ENCODE measurements at regions of chr4 and their contacts with region 1.

Region 1: DNA sequence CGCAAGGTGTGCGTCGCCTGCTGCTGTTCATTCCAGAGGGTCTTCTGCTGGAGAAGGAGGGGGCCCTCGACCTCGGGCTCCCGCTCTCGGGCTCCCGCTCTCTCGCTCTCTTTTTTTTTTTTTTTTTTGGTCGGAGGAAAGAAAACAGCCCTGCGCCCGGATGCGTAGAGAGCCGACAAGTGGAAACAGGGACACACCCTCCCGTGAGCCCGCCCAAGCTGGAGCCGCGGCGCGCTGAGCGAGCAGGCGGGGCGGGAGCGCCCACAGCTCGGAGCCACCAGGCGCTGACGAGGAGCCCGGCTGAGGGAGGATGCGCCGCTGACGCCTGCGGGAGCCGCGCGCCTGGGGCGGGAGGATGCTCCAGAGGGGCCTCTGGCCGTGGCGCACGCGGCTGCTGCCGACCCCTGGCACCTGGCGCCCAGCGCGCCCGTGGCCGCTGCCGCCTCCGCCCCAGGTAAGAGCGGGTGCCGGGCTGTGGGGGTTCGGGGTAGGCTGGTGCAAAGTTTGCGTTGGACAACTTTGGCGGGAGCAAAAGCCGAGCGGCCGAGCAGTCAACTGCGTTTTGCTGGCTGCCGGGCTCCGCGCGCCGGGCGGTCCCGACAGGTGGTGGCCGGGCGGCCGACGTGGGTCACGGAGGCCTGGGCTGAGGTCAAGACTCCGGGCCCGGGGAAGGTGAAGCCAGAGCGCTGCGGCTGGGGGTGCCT is at the start of gene MCUB:
- DNase-seq: peak; percentile 89
- ATAC-seq: peak; percentile 82
- H3K4me3 ChIP-seq: peak within 1 kb of the TSS; percentile 83 to 93 (median 91)
- H3K4me3 Mint-ChIP-seq: peak within 1 kb of the TSS; percentile 100
- H3K27ac ChIP-seq: peak within 1 kb of the TSS; percentile 77 to 83
- H3K27ac Mint-ChIP-seq: peak within 1 kb of the TSS; percentile 100
- H3K4me1 ChIP-seq: peaks cover 17 to 19% of the 10 kb centered on the region in 2 donors
- H3K4me1 Mint-ChIP-seq: peaks cover 50% of the 10 kb centered on the region
- H3K27me3 ChIP-seq: no peaks in the 10 kb centered on the region
- H3K27me3 Mint-ChIP-seq: no peaks in the 10 kb centered on the region
- CTCF ChIP-seq: no peak
- total RNA-seq, gene MCUB: 52.4 and 59.3 TPM in 2 replicates

Region 2: GRCh38 chr4:109548655-109549054 is 11.5 kb before region 1 on chr4:
- CTCF ChIA-PET with region 1: no interaction called
- POLR2A ChIA-PET with region 1: no interaction called
- intact Hi-C with region 1: no loop called
- DNase-seq: no peak
- ATAC-seq: no peak
- H3K4me3 ChIP-seq: no peak overlapping the region
- H3K4me3 Mint-ChIP-seq: no peak overlapping the region
- H3K27ac ChIP-seq: peak overlapping the region in 1 of 2 donors; percentile 22
- H3K27ac Mint-ChIP-seq: peak overlapping the region; percentile 12
- H3K4me1 ChIP-seq: peaks cover 8% of the 10 kb centered on the region in 2 donors
- H3K4me1 Mint-ChIP-seq: peaks cover 13% of the 10 kb centered on the region
- H3K27me3 ChIP-seq: no peaks in the 10 kb centered on the region
- H3K27me3 Mint-ChIP-seq: no peaks in the 10 kb centered on the region
- CTCF ChIP-seq: no peak

Region 3: GRCh38 chr4:109611045-109611646 is 51.0 kb after region 1 on chr4:
- CTCF ChIA-PET with region 1: no interaction called
- POLR2A ChIA-PET with region 1: no interaction called
- intact Hi-C with region 1: loop called (anchors 10 kb)
- DNase-seq: no peak
- ATAC-seq: no peak
- H3K4me3 ChIP-seq: no peak overlapping the region
- H3K4me3 Mint-ChIP-seq: no peak overlapping the region
- H3K27ac ChIP-seq: no peak overlapping the region
- H3K27ac Mint-ChIP-seq: no peak overlapping the region
- H3K4me1 ChIP-seq: peaks cover 8 to 19% of the 10 kb centered on the region in 2 donors
- H3K4me1 Mint-ChIP-seq: peaks cover 43% of the 10 kb centered on the region
- H3K27me3 ChIP-seq: no peaks in the 10 kb centered on the region
- H3K27me3 Mint-ChIP-seq: no peaks in the 10 kb centered on the region
- CTCF ChIP-seq: no peak

Region 4: GRCh38 chr4:109702950-109703663 is 143.0 kb after region 1 on chr4 and contains the start of gene CASP6:
- CTCF ChIA-PET with region 1: interaction called, 6 read pairs
- POLR2A ChIA-PET with region 1: interaction called, 6 read pairs
- intact Hi-C with region 1: loop called (anchors 2 kb)
- DNase-seq: peak; percentile 78
- ATAC-seq: peak; percentile 80
- H3K4me3 ChIP-seq: peak within 1 kb of the TSS; percentile 69 to 86 (median 78)
- H3K4me3 Mint-ChIP-seq: peak within 1 kb of the TSS; percentile 97
- H3K27ac ChIP-seq: peak within 1 kb of the TSS; percentile 11 to 57
- H3K27ac Mint-ChIP-seq: peak within 1 kb of the TSS; percentile 88
- H3K4me1 ChIP-seq: peaks cover 14 to 18% of the 10 kb centered on the region in 2 donors
- H3K4me1 Mint-ChIP-seq: peaks cover 22% of the 10 kb centered on the region
- H3K27me3 ChIP-seq: no peaks in the 10 kb centered on the region
- H3K27me3 Mint-ChIP-seq: no peaks in the 10 kb centered on the region
- CTCF ChIP-seq: peak; percentile 72
- total RNA-seq, gene CASP6: 7.7 and 8.3 TPM in 2 replicates

Region 5: GRCh38 chr4:109729718-109730618 is 169.8 kb after region 1 on chr4 and contains the start of gene PLA2G12A:
- CTCF ChIA-PET with region 1: no interaction called
- POLR2A ChIA-PET with region 1: interaction called, 4 read pairs
- intact Hi-C with region 1: loop called (anchors 1 kb)
- DNase-seq: peak; percentile 90
- ATAC-seq: peak; percentile 88
- H3K4me3 ChIP-seq: peak within 1 kb of the TSS; percentile 75 to 95 (median 83)
- H3K4me3 Mint-ChIP-seq: peak within 1 kb of the TSS; percentile 94
- H3K27ac ChIP-seq: peak within 1 kb of the TSS; percentile 41 to 68
- H3K27ac Mint-ChIP-seq: peak within 1 kb of the TSS; percentile 84
- H3K4me1 ChIP-seq: peaks cover 6 to 10% of the 10 kb centered on the region in 2 donors
- H3K4me1 Mint-ChIP-seq: peaks cover 13% of the 10 kb centered on the region
- H3K27me3 ChIP-seq: no peaks in the 10 kb centered on the region
- H3K27me3 Mint-ChIP-seq: no peaks in the 10 kb centered on the region
- CTCF ChIP-seq: no peak
- total RNA-seq, gene PLA2G12A: 7.9 and 8.5 TPM in 2 replicates

Region 6: GRCh38 chr4:110193822-110194761 is 634.0 kb after region 1 on chr4:
- CTCF ChIA-PET with region 1: no interaction called
- POLR2A ChIA-PET with region 1: no interaction called
- intact Hi-C with region 1: loop called (anchors 5 kb)
- DNase-seq: peak; percentile 82
- ATAC-seq: peak; percentile 78
- H3K4me3 ChIP-seq: no peak overlapping the region
- H3K4me3 Mint-ChIP-seq: peak overlapping the region; percentile 4
- H3K27ac ChIP-seq: peak overlapping the region; percentile 1 to 71
- H3K27ac Mint-ChIP-seq: peak overlapping the region; percentile 68
- H3K4me1 ChIP-seq: peaks cover 16 to 17% of the 10 kb centered on the region in 2 donors
- H3K4me1 Mint-ChIP-seq: peaks cover 30% of the 10 kb centered on the region
- H3K27me3 ChIP-seq: no peaks in the 10 kb centered on the region
- H3K27me3 Mint-ChIP-seq: no peaks in the 10 kb centered on the region
- CTCF ChIP-seq: no peak

Region 7: GRCh38 chr4:110849461-110849860 is 1289.3 kb after region 1 on chr4:
- CTCF ChIA-PET with region 1: no interaction called
- POLR2A ChIA-PET with region 1: no interaction called
- intact Hi-C with region 1: no loop called
- DNase-seq: no peak
- ATAC-seq: no peak
- H3K4me3 ChIP-seq: no peak overlapping the region
- H3K4me3 Mint-ChIP-seq: no peak overlapping the region
- H3K27ac ChIP-seq: no peak overlapping the region
- H3K27ac Mint-ChIP-seq: no peak overlapping the region
- H3K4me1 ChIP-seq: no peaks in the 10 kb centered on the region
- H3K4me1 Mint-ChIP-seq: no peaks in the 10 kb centered on the region
- H3K27me3 ChIP-seq: no peaks in the 10 kb centered on the region
- H3K27me3 Mint-ChIP-seq: no peaks in the 10 kb centered on the region
- CTCF ChIP-seq: no peak

Measured in B cell (primary cell).